ENCODE measurements at regions of chr3 and their contacts with region 1.

Region 1: GRCh38 chr3:24494618-24495325 is at the start of gene THRB:
- DNase-seq: peak; percentile 79 to 92
- H3K4me3 ChIP-seq: peak within 1 kb of the TSS; percentile 67
- H3K4me1 ChIP-seq: peaks cover 40% of the 10 kb centered on the region
- H3K27me3 ChIP-seq: no peaks in the 10 kb centered on the region

Region 2: GRCh38 chr3:23999012-23999641 is 495.6 kb before region 1 on chr3:
- in situ Hi-C with region 1: loop called (anchors 25 kb)
- DNase-seq: peak; percentile 46 to 86
- H3K4me3 ChIP-seq: no peak overlapping the region
- H3K4me1 ChIP-seq: peaks cover 9% of the 10 kb centered on the region
- H3K27me3 ChIP-seq: no peaks in the 10 kb centered on the region; the same call in 1 of the 2 replicates

Region 3: DNA sequence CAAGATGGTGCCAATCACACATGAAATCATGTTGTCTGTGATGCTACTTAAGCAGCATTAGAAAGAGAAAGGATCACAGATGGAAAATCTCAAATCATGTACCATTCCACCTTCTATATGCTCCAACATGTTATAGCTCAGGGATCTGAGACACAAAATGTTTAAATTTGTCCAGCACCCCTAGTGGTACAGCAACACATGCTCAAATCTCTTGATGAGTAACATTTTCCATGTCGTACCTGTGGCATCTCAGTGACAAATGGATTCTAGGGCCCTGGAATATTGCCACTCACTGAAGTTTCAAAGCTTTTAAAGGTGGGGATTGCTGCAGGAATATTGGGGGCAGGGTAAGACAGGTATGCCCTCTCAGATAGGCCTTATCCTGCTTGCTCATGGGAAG is 419.3 kb after region 1 on chr3:
- in situ Hi-C with region 1: no loop called
- DNase-seq: no peak
- H3K4me3 ChIP-seq: no peak overlapping the region
- H3K4me1 ChIP-seq: no peaks in the 10 kb centered on the region
- H3K27me3 ChIP-seq: no peaks in the 10 kb centered on the region

Measured in HAP-1 (cell line).